B cell (primary cell): ENCODE measurements at regions of chr7 and their contacts with region 1.

Region 1: GRCh38 chr7:21352540-21353387 is 75.1 kb upstream of the SP4 start:
- DNase-seq: peak; percentile 87
- ATAC-seq: peak; percentile 81
- H3K4me3 ChIP-seq: peak overlapping the region in 4 of 5 experiments; percentile 14 to 46 (median 32)
- H3K4me3 Mint-ChIP-seq: peak overlapping the region; percentile 82
- H3K27ac ChIP-seq: peak overlapping the region; percentile 79 to 90
- H3K27ac Mint-ChIP-seq: peak overlapping the region; percentile 92
- H3K4me1 ChIP-seq: peaks cover 50 to 60% of the 10 kb centered on the region in 2 donors
- H3K4me1 Mint-ChIP-seq: peaks cover 55% of the 10 kb centered on the region
- H3K27me3 ChIP-seq: no peaks in the 10 kb centered on the region
- H3K27me3 Mint-ChIP-seq: no peaks in the 10 kb centered on the region
- CTCF ChIP-seq: peak; percentile 14

Region 2: DNA sequence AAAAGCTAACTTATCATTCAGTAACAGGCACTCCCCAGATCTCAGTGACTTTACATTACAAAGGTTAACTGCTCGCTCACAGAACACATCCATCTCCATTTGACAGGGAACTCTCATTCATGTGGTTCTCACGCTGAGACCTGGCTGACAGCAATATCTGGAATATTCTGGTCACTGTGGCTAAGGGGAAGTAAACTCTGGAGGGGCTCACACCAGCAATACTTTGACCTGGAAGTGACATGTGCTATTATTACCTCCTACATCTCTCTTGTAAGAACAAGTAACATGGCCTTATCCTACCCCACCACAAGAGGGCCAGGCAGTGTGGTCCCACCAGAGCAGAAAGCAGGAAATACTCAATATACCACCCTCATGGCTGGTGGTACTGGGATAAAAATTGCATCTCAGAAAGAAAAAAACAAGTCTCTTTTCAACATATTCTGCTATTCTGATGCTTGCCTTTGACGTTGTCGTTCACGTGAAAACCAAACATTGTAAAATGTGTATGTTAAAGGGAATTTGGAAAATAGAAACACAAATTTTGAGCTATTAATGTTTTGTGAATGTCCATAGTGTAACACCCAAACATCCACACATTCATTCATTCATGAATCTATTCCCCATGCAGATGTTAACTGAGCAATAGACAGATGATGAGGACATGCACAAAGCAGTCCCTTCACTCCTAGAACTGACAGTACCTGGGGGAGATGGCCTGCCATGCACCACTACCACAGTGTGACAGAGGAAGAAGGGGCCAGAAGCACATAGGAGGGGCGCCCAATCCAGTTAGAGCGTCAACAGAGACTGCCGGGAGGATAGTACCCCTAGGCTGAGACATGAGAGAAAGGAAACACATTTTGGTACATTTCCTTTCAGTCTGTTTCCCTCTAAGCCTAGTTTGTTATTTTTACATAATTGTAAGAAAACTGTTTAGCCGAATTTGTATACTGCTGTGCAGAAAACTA is 90.9 kb before region 1 on chr7:
- CTCF ChIA-PET with region 1: interaction called, 13 read pairs
- POLR2A ChIA-PET with region 1: no interaction called
- intact Hi-C with region 1: loop called (anchors 2 kb)
- DNase-seq: peak; percentile 73
- ATAC-seq: peak; percentile 93
- H3K4me3 ChIP-seq: no peak overlapping the region
- H3K4me3 Mint-ChIP-seq: peak overlapping the region; percentile 14
- H3K27ac ChIP-seq: peak overlapping the region in 1 of 2 donors; percentile 28
- H3K27ac Mint-ChIP-seq: peak overlapping the region; percentile 67
- H3K4me1 ChIP-seq: peaks cover 12% of the 10 kb centered on the region in 2 donors
- H3K4me1 Mint-ChIP-seq: peaks cover 14% of the 10 kb centered on the region
- H3K27me3 ChIP-seq: no peaks in the 10 kb centered on the region
- H3K27me3 Mint-ChIP-seq: no peaks in the 10 kb centered on the region
- CTCF ChIP-seq: peak; percentile 73

Region 3: DNA sequence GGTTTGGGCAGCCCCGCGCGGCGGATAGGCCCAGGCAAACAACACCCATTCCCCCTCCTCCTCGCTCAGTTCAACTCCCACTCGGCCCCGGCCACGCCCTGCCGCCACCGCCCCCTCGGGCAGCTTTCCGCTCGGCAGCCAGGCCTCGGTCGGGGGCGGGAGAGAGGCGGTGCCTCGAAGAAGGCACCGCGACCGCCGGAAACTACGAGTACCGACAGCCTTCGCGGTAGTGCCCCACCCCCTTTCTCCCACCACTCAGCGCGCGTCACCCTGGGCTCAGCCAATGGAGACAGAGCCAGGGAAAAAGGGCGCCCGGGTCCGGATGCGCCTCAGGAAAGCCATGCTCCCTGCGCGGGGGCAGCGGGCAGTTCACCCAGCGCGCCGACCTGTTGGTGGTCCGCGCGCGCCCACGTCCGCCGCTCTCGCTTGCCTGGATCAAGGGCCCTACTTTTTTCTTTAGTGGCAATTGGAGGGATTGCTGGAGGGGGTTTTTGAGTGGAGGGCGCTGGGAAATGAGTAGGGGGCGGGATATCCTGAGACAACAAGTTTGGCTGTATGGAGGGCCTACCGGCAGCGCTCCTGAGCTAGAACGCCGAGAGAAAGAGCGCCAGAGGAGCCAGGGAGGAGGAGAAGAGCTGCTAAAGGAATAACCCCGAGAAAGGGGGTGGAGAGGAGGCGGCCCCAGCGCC is 74.6 kb after region 1 on chr7:
- CTCF ChIA-PET with region 1: interaction called, 15 read pairs
- POLR2A ChIA-PET with region 1: interaction called, 18 read pairs
- intact Hi-C with region 1: loop called (anchors 1 kb)
- DNase-seq: peak; percentile 99
- ATAC-seq: peak; percentile 75
- H3K4me3 ChIP-seq: peak overlapping the region; percentile 83 to 98 (median 92)
- H3K4me3 Mint-ChIP-seq: peak overlapping the region; percentile 99
- H3K27ac ChIP-seq: peak overlapping the region; percentile 89 to 96
- H3K27ac Mint-ChIP-seq: peak overlapping the region; percentile 99
- H3K4me1 ChIP-seq: peaks cover 37 to 40% of the 10 kb centered on the region in 2 donors
- H3K4me1 Mint-ChIP-seq: peaks cover 49% of the 10 kb centered on the region
- H3K27me3 ChIP-seq: no peaks in the 10 kb centered on the region
- H3K27me3 Mint-ChIP-seq: no peaks in the 10 kb centered on the region
- CTCF ChIP-seq: no peak

Region 4: GRCh38 chr7:21945454-21946227 is 592.9 kb after region 1 on chr7 and contains the start of gene CDCA7L:
- CTCF ChIA-PET with region 1: no interaction called
- POLR2A ChIA-PET with region 1: interaction called, 4 read pairs
- intact Hi-C with region 1: loop called (anchors 2 kb)
- DNase-seq: peak; percentile 96
- ATAC-seq: peak; percentile 80
- H3K4me3 ChIP-seq: peak within 1 kb of the TSS; percentile 74 to 95 (median 81)
- H3K4me3 Mint-ChIP-seq: peak within 1 kb of the TSS; percentile 97
- H3K27ac ChIP-seq: peak within 1 kb of the TSS; percentile 97 to 98
- H3K27ac Mint-ChIP-seq: peak within 1 kb of the TSS; percentile 99
- H3K4me1 ChIP-seq: peaks cover 56 to 63% of the 10 kb centered on the region in 2 donors
- H3K4me1 Mint-ChIP-seq: peaks cover 65% of the 10 kb centered on the region
- H3K27me3 ChIP-seq: no peaks in the 10 kb centered on the region
- H3K27me3 Mint-ChIP-seq: no peaks in the 10 kb centered on the region
- CTCF ChIP-seq: peak; percentile 17
- total RNA-seq, gene CDCA7L: 126 and 129 TPM in 2 replicates

Region 5: DNA sequence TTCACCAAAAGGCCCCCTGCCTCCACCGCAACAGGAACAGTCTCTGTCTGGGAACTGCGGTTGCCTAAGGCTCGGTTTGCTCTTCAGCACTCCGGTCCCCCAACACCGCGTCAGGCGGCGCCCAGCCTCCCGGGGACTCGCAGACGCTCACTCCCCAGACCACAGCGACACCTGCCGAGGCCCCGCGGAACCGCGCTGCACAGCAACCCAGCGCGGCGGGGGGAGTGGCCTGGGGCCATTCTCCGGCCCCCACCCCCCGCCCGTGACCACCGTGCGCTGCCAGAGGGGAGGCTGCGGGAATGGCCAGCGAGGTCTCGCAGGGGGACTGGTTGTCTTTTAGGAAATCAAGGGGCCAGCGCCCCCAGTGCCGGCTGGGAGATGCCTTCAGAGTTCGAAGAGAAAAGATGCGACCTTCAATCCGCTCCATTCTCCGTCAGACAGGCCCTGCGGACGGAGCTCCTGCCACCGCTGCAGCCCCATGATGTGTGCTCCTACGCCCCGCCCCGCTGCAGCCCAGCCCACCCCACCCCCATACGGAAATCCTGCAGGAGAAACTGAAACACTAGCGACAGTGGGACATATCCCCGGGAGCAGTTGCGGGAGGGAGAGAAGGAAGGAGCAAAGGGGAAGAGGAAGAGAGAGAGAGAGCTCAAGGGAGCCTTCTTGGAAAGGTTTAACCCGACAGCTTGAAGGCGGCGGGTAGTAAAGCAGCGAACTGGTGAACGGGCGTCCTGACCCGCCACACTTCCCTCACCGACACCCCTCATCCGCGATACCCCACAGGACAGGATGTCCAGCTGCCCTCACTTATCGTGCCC is 730.3 kb after region 1 on chr7:
- CTCF ChIA-PET with region 1: no interaction called
- POLR2A ChIA-PET with region 1: no interaction called
- intact Hi-C with region 1: loop called (anchors 5 kb)
- DNase-seq: peak; percentile 92
- ATAC-seq: peak; percentile 97
- H3K4me3 ChIP-seq: peak overlapping the region; percentile 58 to 80 (median 72)
- H3K4me3 Mint-ChIP-seq: peak overlapping the region; percentile 94
- H3K27ac ChIP-seq: peak overlapping the region; percentile 63 to 68
- H3K27ac Mint-ChIP-seq: peak overlapping the region; percentile 90
- H3K4me1 ChIP-seq: peaks cover 8 to 14% of the 10 kb centered on the region in 2 donors
- H3K4me1 Mint-ChIP-seq: peaks cover 18% of the 10 kb centered on the region
- H3K27me3 ChIP-seq: peaks cover 0 to 11% (median 7%) of the 10 kb centered on the region in 4 experiments
- H3K27me3 Mint-ChIP-seq: peaks cover 25% of the 10 kb centered on the region
- CTCF ChIP-seq: peak; percentile 98

Region 6: GRCh38 chr7:22854158-22855048 is 1501.6 kb after region 1 on chr7:
- CTCF ChIA-PET with region 1: no interaction called
- POLR2A ChIA-PET with region 1: interaction called, 14 read pairs
- intact Hi-C with region 1: no loop called
- DNase-seq: peak; percentile 88
- ATAC-seq: peak; percentile 83
- H3K4me3 ChIP-seq: peak overlapping the region; percentile 74 to 87 (median 80)
- H3K4me3 Mint-ChIP-seq: peak overlapping the region; percentile 97
- H3K27ac ChIP-seq: peak overlapping the region; percentile 71 to 87
- H3K27ac Mint-ChIP-seq: peak overlapping the region; percentile 94
- H3K4me1 ChIP-seq: peaks cover 17 to 27% of the 10 kb centered on the region in 2 donors
- H3K4me1 Mint-ChIP-seq: peaks cover 38% of the 10 kb centered on the region
- H3K27me3 ChIP-seq: no peaks in the 10 kb centered on the region
- H3K27me3 Mint-ChIP-seq: no peaks in the 10 kb centered on the region
- CTCF ChIP-seq: peak; percentile 84

Region 7: DNA sequence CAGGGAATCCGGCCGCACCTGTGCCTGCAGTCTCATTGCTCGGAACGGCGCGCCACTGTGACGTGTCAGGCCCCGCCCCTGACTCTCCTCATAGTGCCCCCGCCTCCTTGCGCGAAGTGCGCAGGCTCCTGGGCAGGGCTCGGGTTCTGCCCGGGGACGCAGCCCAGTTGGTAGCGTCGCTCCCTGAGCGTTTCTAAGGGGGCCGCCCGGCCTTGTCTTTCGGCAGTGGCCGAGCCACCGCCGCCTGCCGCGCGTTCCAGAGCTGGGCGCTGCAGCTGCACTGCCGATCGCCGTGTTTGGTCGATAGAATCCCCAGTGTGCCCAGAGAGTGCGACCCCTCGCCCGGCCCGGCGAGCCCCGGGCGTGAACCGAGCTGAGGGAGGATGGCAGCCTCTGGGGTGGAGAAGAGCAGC is 1752.9 kb after region 1 on chr7 and contains the start of gene KLHL7:
- CTCF ChIA-PET with region 1: no interaction called
- POLR2A ChIA-PET with region 1: no interaction called
- intact Hi-C with region 1: loop called (anchors 10 kb)
- DNase-seq: peak; percentile 96
- ATAC-seq: peak; percentile 96
- H3K4me3 ChIP-seq: peak within 1 kb of the TSS; percentile 86 to 99 (median 94)
- H3K4me3 Mint-ChIP-seq: peak within 1 kb of the TSS; percentile 99
- H3K27ac ChIP-seq: peak within 1 kb of the TSS; percentile 88 to 95
- H3K27ac Mint-ChIP-seq: peak within 1 kb of the TSS; percentile 97
- H3K4me1 ChIP-seq: peaks cover 15 to 16% of the 10 kb centered on the region in 2 donors
- H3K4me1 Mint-ChIP-seq: peaks cover 32% of the 10 kb centered on the region
- H3K27me3 ChIP-seq: no peaks in the 10 kb centered on the region
- H3K27me3 Mint-ChIP-seq: no peaks in the 10 kb centered on the region
- CTCF ChIP-seq: no peak
- total RNA-seq, gene KLHL7: 22.8 and 29.5 TPM in 2 replicates